HCT116 (cell line): ENCODE measurements at regions of chr15 and their contacts with region 1.

Region 1: GRCh38 chr15:84929744-84930371 is 45.4 kb downstream of the SLC28A1 start:
- DNase-seq: peak; percentile 94
- ATAC-seq: peak; percentile 88
- H3K4me3 ChIP-seq: peak overlapping the region in 1 of 2 experiments; percentile 36; a peak in 2 of 4 replicates
- H3K27ac ChIP-seq: peak overlapping the region; percentile 61
- H3K4me1 ChIP-seq: peaks cover 24 to 35% of the 10 kb centered on the region in 2 experiments
- H3K27me3 ChIP-seq: no peaks in the 10 kb centered on the region
- CTCF ChIP-seq: no peak
- POLR2A ChIP-seq: no peak
- RAD21 ChIP-seq: peak; percentile 35; the same call in 1 of the 2 replicates

Region 2: DNA sequence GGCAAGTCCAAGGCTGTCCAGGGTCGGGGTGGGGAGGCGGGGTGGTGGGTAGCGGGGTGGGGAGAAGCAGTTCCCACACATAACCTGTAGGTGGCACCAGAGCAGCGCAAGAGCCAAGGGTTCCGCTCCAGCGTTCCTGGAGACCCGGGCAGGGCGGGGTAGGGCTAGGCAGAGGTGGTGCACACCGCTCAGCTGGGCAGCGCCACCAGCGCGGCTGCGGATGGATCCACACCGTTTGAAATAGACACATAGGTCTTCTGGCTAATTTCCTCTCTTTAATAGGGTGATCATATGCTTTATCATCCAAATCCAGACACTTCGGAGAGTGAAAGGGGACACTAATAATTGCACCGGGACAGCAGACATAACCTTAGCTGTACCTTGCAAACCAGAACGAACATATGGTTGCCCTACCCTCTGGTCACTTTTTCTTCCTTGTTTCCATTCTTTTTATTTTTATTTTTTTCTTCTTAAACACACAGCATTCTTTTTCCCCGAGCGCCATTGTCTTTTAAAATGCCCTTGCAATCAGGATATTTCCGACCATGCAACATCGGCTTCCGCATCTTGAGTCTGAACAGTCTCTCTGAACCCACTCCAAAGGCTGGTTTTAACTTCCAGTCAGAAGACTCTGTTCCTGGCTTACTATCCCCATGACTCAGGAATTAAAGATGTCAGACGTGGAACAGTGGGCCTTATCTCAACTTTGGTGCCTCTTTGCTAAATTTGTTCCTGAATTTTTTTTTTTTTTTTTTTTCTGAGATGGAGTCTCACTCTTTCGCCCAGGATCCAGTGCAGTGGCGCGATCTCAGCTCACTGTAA is 341.6 kb before region 1 on chr15:
- CTCF ChIA-PET with region 1: interaction called, 5 read pairs
- POLR2A ChIA-PET with region 1: no interaction called
- RAD21 ChIA-PET with region 1: interaction called, 3 read pairs
- intact Hi-C with region 1: loop called (anchors 5 kb)
- DNase-seq: peak; percentile 85
- ATAC-seq: peak; percentile 99
- H3K4me3 ChIP-seq: peak overlapping the region; percentile 35 to 47
- H3K27ac ChIP-seq: no peak overlapping the region
- H3K4me1 ChIP-seq: peaks cover 0 to 11% of the 10 kb centered on the region in 2 experiments; a peak in 2 of 4 replicates
- H3K27me3 ChIP-seq: no peaks in the 10 kb centered on the region
- CTCF ChIP-seq: peak; percentile 62 to 72 (median 66)
- POLR2A ChIP-seq: no peak
- RAD21 ChIP-seq: peak; percentile 83

Region 3: DNA sequence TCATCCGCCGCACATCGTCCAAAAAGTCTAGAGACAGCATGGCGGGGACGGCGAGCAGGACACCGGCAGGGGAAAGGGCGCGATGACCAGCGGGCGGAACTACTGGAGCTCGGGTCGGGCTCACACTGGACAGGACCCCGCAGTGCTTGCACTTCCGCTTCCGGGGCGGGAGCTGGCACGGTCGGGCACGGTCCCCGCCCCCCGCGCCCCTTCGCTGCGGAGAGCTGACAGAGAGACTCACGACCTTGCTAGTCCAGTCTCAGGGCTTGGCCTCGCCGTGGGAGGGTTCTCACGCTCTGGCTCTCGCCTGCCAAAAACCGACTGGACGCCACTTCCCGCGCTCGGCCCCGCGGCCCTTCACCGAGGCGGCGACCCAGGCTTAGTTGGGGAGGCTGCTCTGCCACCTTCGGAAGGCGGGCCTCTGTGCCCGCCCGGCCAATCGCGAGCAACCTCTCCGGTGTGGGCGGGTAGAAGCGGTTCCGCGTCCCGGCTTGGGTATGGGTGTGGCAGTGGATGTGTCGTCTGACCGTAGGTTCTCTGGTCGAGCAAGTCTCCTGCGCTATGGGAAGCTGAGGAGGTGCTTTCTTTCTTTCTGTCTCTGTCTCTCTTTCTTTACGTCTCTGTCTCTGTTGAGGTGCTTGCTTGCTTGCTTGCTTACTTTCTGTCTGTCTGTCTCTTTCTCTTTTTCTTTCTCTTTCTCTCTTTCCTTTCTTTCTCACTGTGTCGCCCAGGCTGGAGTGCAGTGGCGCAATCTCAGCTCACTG is 213.6 kb before region 1 on chr15 and contains the start of gene SEC11A:
- CTCF ChIA-PET with region 1: no interaction called
- POLR2A ChIA-PET with region 1: interaction called, 7 read pairs
- RAD21 ChIA-PET with region 1: no interaction called
- intact Hi-C with region 1: loop called (anchors 5 kb)
- DNase-seq: peak; percentile 92
- ATAC-seq: peak; percentile 97
- H3K4me3 ChIP-seq: peak within 1 kb of the TSS; percentile 95 to 99
- H3K27ac ChIP-seq: peak within 1 kb of the TSS; percentile 97
- H3K4me1 ChIP-seq: peaks cover 8 to 24% of the 10 kb centered on the region in 2 experiments; a peak in 3 of 4 replicates
- H3K27me3 ChIP-seq: no peaks in the 10 kb centered on the region
- CTCF ChIP-seq: no peak
- POLR2A ChIP-seq: peak; percentile 96
- RAD21 ChIP-seq: no peak
- total RNA-seq, gene SEC11A: 175 TPM

Region 4: DNA sequence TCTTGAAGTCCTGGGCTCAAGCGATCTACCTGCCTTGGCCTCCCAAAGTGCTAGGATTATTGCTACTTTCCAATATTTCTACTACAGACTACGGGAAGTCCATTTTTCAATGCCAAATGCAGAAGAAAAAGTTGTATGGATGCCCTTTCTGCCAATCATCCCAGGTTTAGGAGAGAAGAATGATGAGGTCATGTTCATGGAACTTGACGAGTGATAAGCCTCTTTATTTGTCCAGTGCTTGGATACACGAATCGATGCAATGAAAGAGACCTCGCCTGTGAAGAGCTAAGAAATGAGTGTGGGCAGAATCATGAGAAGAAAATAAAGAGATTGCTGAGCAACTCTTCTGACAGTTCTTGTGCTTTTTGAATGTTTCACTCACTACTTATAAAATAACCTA is 46.4 kb before region 1 on chr15:
- CTCF ChIA-PET with region 1: interaction called, 5 read pairs
- POLR2A ChIA-PET with region 1: no interaction called
- RAD21 ChIA-PET with region 1: no interaction called
- intact Hi-C with region 1: loop called (anchors 1 kb)
- DNase-seq: no peak
- ATAC-seq: no peak
- H3K4me3 ChIP-seq: no peak overlapping the region
- H3K27ac ChIP-seq: no peak overlapping the region
- H3K4me1 ChIP-seq: peaks cover 0 to 5% of the 10 kb centered on the region in 2 experiments; a peak in 2 of 4 replicates
- H3K27me3 ChIP-seq: no peaks in the 10 kb centered on the region
- CTCF ChIP-seq: no peak
- POLR2A ChIP-seq: no peak
- RAD21 ChIP-seq: no peak

Region 5: GRCh38 chr15:85563328-85563727 is 633.5 kb after region 1 on chr15:
- CTCF ChIA-PET with region 1: no interaction called
- POLR2A ChIA-PET with region 1: no interaction called
- RAD21 ChIA-PET with region 1: no interaction called
- intact Hi-C with region 1: no loop called
- DNase-seq: no peak
- ATAC-seq: no peak
- H3K4me3 ChIP-seq: no peak overlapping the region
- H3K27ac ChIP-seq: no peak overlapping the region
- H3K4me1 ChIP-seq: no peaks in the 10 kb centered on the region
- H3K27me3 ChIP-seq: no peaks in the 10 kb centered on the region
- CTCF ChIP-seq: no peak
- POLR2A ChIP-seq: no peak
- RAD21 ChIP-seq: no peak